ENCODE measurements at regions of chr19 and their contacts with region 1.

Region 1: DNA sequence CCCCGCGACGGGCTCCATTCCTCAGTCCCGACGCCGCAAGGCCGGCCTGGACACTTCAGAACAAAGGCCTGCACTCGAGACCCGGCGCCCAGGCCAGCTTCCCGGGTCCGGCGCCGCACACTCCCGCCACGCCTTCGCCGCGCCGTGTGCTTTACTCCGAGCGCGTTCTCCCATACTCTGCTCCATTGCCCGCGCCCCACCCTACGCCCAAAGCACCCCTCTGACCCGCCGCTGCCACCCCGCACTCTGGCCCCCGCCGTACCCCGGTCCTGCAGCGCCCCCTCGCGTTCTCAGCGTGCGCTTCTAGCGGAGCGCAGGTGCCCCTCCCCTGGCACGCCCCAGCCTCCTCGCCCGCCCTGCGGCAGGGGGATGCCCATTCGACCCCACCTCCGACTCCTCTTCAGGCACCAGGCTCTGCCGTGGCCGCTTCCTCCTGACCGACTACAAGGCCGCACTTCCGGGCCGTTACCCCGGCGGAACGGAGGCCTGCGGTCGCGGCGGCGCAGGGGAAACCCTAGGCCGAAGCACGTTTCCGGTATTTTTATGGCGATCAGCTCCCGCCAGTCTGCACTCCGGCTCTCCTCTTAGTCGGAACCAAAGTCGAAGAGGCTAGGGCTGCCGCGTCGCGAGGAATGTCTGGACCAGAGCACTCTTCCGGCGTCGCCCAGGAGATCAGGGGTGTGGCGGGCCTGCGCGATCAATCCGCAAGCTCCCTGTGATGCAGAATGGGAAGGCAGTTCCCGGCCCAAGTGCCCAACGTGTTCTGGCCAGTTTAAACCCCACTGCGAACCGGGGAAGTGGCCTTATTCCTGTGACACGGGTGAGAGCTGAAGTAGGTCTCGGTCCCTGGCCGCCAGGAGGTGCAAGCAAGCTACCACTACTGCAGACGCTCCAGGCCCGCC is at the start of gene ZBTB45:
- DNase-seq: peak; percentile 98
- H3K4me3 Mint-ChIP-seq: peak within 1 kb of the TSS; percentile 83
- H3K27ac Mint-ChIP-seq: peak within 1 kb of the TSS; percentile 100
- H3K4me1 Mint-ChIP-seq: peaks cover 27% of the 10 kb centered on the region
- H3K27me3 Mint-ChIP-seq: no peaks in the 10 kb centered on the region
- CTCF ChIP-seq: peak; percentile 86
- total RNA-seq, gene ZBTB45: 12.8 and 15.0 TPM in 2 replicates

Region 2: DNA sequence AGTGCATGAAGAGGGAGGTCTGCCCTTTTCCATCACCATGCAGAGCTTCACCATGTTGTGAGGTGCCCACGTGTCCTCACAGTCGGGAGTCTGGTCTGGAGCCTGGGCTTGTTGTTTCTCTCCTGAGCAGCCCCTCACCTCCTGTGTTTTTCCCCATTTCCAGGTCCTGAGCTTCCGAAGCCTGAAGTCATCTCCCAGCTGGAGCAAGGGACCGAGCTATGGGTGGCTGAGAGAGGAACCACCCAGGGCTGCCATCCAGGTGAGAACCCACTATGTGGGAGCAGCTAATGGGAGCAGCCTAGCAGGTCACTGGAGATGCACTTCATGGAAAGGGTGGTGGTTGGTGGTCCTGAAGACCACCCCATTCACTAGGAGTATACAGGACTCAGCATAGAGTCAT is 233.7 kb before region 1 on chr19:
- CTCF ChIA-PET with region 1: no interaction called
- POLR2A ChIA-PET with region 1: no interaction called
- intact Hi-C with region 1: no loop called
- DNase-seq: no peak
- H3K4me3 Mint-ChIP-seq: no peak overlapping the region
- H3K27ac Mint-ChIP-seq: no peak overlapping the region
- H3K4me1 Mint-ChIP-seq: peaks cover 7% of the 10 kb centered on the region
- H3K27me3 Mint-ChIP-seq: no peaks in the 10 kb centered on the region
- CTCF ChIP-seq: no peak

Region 3: DNA sequence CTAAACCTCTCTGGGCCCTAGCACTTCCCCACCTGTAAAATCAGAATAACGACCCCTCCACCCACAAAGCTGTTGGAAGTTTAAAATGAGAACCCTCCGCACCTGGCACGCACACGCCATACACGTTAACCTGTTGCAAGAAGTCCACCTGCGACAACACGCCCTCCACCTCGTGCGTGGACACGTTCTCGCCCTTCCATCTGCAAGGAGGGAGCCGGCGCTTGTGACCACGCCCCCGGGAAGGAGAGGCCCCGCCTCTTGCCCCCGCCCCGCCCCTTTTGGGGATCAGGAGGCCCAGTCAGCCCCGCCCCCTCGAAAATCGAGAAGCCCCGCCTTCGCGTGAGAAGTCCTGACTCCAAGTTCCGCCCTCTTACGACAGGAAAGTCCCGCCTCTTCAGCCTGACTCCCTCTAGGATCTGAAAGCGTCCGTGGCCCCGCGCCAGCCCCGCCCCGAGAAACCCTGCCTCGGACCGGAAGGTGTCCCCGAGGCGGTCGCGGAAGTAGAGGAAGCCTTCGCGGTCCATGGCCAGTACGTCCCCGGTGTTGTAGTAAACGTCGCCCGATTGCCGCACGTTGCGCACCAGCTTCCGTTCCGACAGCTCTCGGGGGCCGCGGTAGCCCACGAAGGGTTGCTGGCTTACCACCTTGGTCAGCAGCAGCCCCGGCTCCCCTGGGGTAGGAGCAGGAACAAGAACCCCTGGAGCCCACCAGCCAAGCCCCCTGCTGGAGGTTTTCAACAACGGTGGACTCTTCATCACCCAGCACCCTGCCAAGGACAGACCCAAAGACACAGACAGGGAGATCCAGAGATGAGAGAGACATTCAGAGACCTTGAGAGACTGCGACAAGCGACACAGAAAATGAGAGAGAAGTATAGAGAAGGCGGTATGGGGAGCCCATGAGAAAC is 20.3 kb before region 1 on chr19:
- CTCF ChIA-PET with region 1: interaction called, 19 read pairs
- POLR2A ChIA-PET with region 1: interaction called, 27 read pairs
- intact Hi-C with region 1: no loop called
- DNase-seq: peak; percentile 100
- H3K4me3 Mint-ChIP-seq: peak overlapping the region; percentile 83
- H3K27ac Mint-ChIP-seq: peak overlapping the region; percentile 86
- H3K4me1 Mint-ChIP-seq: peaks cover 17% of the 10 kb centered on the region
- H3K27me3 Mint-ChIP-seq: no peaks in the 10 kb centered on the region
- CTCF ChIP-seq: peak; percentile 11

Region 4: GRCh38 chr19:58543826-58544590 is 24.4 kb after region 1 on chr19 and contains the start of gene TRIM28:
- CTCF ChIA-PET with region 1: interaction called, 14 read pairs
- POLR2A ChIA-PET with region 1: interaction called, 194 read pairs
- intact Hi-C with region 1: loop called (anchors 1 kb)
- DNase-seq: peak; percentile 99
- H3K4me3 Mint-ChIP-seq: peak within 1 kb of the TSS; percentile 84
- H3K27ac Mint-ChIP-seq: peak within 1 kb of the TSS; percentile 98
- H3K4me1 Mint-ChIP-seq: peaks cover 20% of the 10 kb centered on the region
- H3K27me3 Mint-ChIP-seq: peaks cover 11% of the 10 kb centered on the region
- CTCF ChIP-seq: no peak
- total RNA-seq, gene TRIM28: 236 and 290 TPM in 2 replicates

Region 5: GRCh38 chr19:58558623-58559274 is 39.1 kb after region 1 on chr19:
- CTCF ChIA-PET with region 1: interaction called, 43 read pairs
- POLR2A ChIA-PET with region 1: interaction called, 166 read pairs
- intact Hi-C with region 1: loop called (anchors 2 kb)
- DNase-seq: peak; percentile 99
- H3K4me3 Mint-ChIP-seq: peak overlapping the region; percentile 98
- H3K27ac Mint-ChIP-seq: peak overlapping the region; percentile 99
- H3K4me1 Mint-ChIP-seq: peaks cover 34% of the 10 kb centered on the region
- H3K27me3 Mint-ChIP-seq: no peaks in the 10 kb centered on the region
- CTCF ChIP-seq: no peak